ENCODE measurements at regions of chr10 and their contacts with region 1.

Region 1: GRCh38 chr10:95183271-95184230 is 10.5 kb upstream of the ACSM6 start:
- DNase-seq: peak; percentile 96
- H3K4me3 ChIP-seq: peak overlapping the region; percentile 70 to 75
- H3K27ac ChIP-seq: peak overlapping the region; percentile 44 to 67; a peak in 3 of 4 replicates
- H3K4me1 ChIP-seq: no peaks in the 10 kb centered on the region; a peak in 1 of 4 replicates
- H3K27me3 ChIP-seq: no peaks in the 10 kb centered on the region
- CTCF ChIP-seq: peak; percentile 87
- EP300 ChIP-seq: 0 out of 4 replicates have a peak, but pooled peaks of 1 of the 2 experiments have one; percentile 48
- RAD21 ChIP-seq: peak; percentile 64

Region 2: GRCh38 chr10:94264085-94264484 is 919.5 kb before region 1 on chr10:
- CTCF ChIA-PET with region 1: no interaction called
- POLR2A ChIA-PET with region 1: no interaction called
- DNase-seq: no peak
- H3K4me3 ChIP-seq: no peak overlapping the region
- H3K27ac ChIP-seq: no peak overlapping the region
- H3K4me1 ChIP-seq: no peaks in the 10 kb centered on the region
- H3K27me3 ChIP-seq: no peaks in the 10 kb centered on the region
- CTCF ChIP-seq: no peak
- EP300 ChIP-seq: no peak
- RAD21 ChIP-seq: no peak

Region 3: GRCh38 chr10:95031656-95032055 is 151.9 kb before region 1 on chr10:
- CTCF ChIA-PET with region 1: no interaction called
- POLR2A ChIA-PET with region 1: no interaction called
- DNase-seq: no peak
- H3K4me3 ChIP-seq: no peak overlapping the region; a peak in 1 of 4 replicates
- H3K27ac ChIP-seq: no peak overlapping the region
- H3K4me1 ChIP-seq: no peaks in the 10 kb centered on the region
- H3K27me3 ChIP-seq: no peaks in the 10 kb centered on the region
- CTCF ChIP-seq: no peak
- EP300 ChIP-seq: no peak
- RAD21 ChIP-seq: no peak

Region 4: GRCh38 chr10:95170790-95171189 is 12.8 kb before region 1 on chr10:
- CTCF ChIA-PET with region 1: interaction called, 16 read pairs
- POLR2A ChIA-PET with region 1: no interaction called
- DNase-seq: no peak
- H3K4me3 ChIP-seq: no peak overlapping the region
- H3K27ac ChIP-seq: no peak overlapping the region
- H3K4me1 ChIP-seq: no peaks in the 10 kb centered on the region
- H3K27me3 ChIP-seq: no peaks in the 10 kb centered on the region
- CTCF ChIP-seq: no peak
- EP300 ChIP-seq: no peak
- RAD21 ChIP-seq: no peak

Region 5: DNA sequence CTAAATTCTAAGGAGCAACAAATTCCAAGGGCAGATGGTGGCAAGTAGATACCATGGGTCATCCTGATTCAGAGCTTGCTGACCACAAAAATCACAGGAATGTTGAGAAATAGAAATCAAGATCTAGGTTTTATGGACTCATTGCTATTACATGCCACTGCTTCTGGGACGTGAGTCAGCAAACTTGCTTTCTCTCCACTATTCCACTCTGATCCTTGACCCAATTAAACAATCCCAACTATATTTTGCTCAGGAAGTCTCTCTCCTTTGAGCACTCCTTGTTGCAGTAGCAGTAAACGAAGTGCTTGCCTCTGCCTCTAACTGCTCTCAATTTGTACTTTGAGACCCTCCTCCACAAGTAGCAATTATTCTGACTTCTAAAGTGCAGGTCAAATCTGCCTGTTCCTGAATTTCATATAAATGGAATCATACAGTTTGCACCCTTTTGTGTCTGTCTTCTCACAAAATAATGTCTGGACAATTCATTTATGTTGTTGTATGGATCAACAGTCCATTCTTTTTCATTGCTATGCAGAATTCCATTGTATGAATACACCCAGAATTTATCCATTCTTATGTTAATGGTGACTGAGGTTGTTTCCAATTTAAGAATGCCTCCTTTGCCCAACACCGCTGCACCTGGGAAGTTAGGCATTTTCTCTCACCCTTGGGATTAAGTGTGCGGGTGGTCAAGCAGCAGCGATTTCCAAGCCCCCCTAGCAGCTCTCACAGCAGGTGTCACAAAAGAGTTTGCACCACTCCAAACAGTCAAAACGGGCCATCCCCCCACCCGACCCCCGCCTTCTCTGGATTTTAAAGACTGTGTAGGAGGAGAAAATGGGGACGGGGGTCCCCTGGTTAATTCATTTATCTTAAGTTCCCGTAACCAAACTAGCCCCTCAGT is 46.4 kb after region 1 on chr10:
- CTCF ChIA-PET with region 1: interaction called, 10 read pairs
- POLR2A ChIA-PET with region 1: no interaction called
- DNase-seq: no peak
- H3K4me3 ChIP-seq: peak overlapping the region; percentile 1 to 31; a peak in 1 of 4 replicates
- H3K27ac ChIP-seq: peak overlapping the region; percentile 82 to 99
- H3K4me1 ChIP-seq: peaks cover 5 to 15% of the 10 kb centered on the region in 2 experiments; a peak in 3 of 4 replicates
- H3K27me3 ChIP-seq: no peaks in the 10 kb centered on the region
- CTCF ChIP-seq: no peak
- EP300 ChIP-seq: peak; percentile 13 to 96; a peak in 1 of 4 replicates
- RAD21 ChIP-seq: no peak

Region 6: DNA sequence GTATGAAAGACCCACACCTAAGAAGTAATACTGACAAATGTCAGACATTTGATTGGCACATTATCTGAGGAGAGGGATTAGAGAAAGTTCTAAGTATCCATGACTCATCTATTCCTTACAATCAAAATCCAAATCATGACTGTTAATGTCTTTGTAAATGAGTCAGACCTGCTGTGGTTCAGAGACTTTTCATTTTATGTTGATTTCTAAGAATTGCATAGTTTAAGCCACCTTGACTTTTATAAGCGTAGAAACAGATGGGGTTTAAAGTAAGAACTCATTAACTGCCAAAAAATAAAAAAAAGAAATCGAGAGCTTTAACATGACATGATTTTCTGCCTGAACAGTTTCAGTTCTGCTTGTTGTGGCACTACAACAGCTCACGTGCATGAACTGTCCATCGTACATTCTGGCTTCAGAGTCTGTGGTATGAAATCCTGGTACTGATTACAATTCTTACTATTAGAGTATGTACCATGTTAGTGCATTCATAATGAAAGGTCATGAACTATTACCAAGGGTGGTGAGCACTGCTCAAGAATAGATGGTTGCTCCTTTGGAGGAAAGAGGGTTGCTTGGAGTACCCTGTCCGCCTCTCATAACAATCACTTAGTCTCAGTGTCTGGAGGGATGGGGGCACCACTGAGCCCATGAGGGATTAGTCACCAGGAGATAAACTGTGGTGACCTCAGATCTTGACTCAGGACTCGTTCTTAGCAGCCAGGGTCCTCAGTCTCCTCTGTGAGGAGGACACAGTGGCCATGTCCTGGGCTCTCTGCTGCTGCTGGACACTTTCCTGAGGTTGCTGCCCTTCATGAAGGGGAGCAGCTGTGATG is 52.7 kb after region 1 on chr10:
- CTCF ChIA-PET with region 1: interaction called, 14 read pairs
- POLR2A ChIA-PET with region 1: no interaction called
- DNase-seq: no peak
- H3K4me3 ChIP-seq: no peak overlapping the region
- H3K27ac ChIP-seq: peak overlapping the region in 1 of 2 experiments; percentile 71; a peak in 2 of 4 replicates
- H3K4me1 ChIP-seq: peaks cover 0 to 8% of the 10 kb centered on the region in 2 experiments; a peak in 2 of 4 replicates
- H3K27me3 ChIP-seq: no peaks in the 10 kb centered on the region
- CTCF ChIP-seq: no peak
- EP300 ChIP-seq: peak in 1 of 2 experiments; percentile 77; a peak in 2 of 4 replicates
- RAD21 ChIP-seq: no peak

Measured in SK-N-SH (cell line).